Naive thymus-derived CD4-positive, alpha-beta T cell (primary cell): ENCODE measurements at regions of chr12 and their contacts with region 1.

Region 1: DNA sequence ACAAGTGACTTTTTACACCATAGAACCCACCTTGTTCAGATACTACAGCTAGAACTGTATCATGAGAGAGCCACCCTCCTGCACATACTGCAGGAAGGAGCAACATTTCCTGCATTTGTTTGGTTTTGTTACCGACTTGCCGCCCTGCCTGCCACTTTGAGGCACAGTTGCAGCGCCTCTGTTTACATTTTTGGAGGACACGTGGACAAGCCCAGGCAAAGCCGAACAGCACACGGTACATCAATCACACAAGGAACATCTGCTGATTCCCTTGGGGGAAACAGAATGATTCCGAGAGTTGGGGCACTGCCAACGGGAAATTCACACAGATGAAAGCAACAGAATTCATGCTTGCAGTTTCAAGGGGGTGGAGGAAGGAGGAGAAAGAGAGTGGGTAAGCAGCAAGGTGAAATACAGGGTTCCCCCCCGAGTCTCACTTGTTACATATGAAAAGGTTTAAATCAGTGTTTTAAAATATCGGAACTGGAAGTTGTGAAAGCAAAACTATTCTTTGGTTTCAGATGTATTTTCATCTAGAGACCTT is 110.7 kb downstream of the BTG1 start:
- DNase-seq: peak; percentile 26 to 79 (median 71)
- ATAC-seq: peak; percentile 54
- H3K4me3 ChIP-seq: peak overlapping the region; percentile 52
- H3K4me3 Mint-ChIP-seq: peak overlapping the region; percentile 84 to 99 (median 91)
- H3K27ac ChIP-seq: peak overlapping the region; percentile 76
- H3K27ac Mint-ChIP-seq: peak overlapping the region; percentile 95 to 100 (median 99)
- H3K4me1 ChIP-seq: peaks cover 71 to 81% of the 10 kb centered on the region in 2 donors
- H3K4me1 Mint-ChIP-seq: peaks cover 49 to 100% (median 94%) of the 10 kb centered on the region in 7 donors
- H3K27me3 ChIP-seq: no peaks in the 10 kb centered on the region
- H3K27me3 Mint-ChIP-seq: no peaks in the 10 kb centered on the region

Region 2: DNA sequence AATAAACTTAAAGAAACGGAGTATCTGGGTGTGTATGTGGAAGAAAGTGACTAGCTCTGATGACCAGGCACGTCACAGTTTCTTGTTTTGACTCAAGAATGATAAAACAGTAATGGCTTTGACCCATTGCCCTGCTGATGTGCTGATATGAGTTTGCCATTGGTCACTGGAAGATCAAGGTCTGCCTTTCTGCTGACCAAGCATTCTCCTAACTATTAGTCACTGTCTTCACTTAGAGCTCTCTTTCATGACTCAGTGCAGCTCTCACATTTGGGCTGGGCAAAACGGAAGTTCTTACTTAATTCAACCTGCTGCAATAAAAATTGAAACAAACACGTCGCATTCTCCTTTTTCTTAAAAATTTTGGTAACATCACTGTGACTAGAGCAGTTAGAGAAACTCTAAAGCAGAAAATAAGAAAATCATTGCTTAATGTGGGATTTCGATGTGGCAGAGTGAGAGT is 256.0 kb before region 1 on chr12:
- CTCF ChIA-PET with region 1: interaction called, 4 read pairs
- POLR2A ChIA-PET with region 1: no interaction called
- intact Hi-C with region 1: loop called in 1 of 2 experiments (anchors 1 kb)
- DNase-seq: peak in 8 of 9 donors; percentile 14 to 47 (median 27)
- ATAC-seq: peak; percentile 75
- H3K4me3 ChIP-seq: peak overlapping the region; percentile 29
- H3K4me3 Mint-ChIP-seq: peak overlapping the region; percentile 72 to 92 (median 83)
- H3K27ac ChIP-seq: peak overlapping the region; percentile 67
- H3K27ac Mint-ChIP-seq: peak overlapping the region; percentile 91 to 97 (median 93)
- H3K4me1 ChIP-seq: peaks cover 10 to 35% of the 10 kb centered on the region in 2 donors
- H3K4me1 Mint-ChIP-seq: peaks cover 19 to 70% (median 50%) of the 10 kb centered on the region in 7 donors
- H3K27me3 ChIP-seq: no peaks in the 10 kb centered on the region
- H3K27me3 Mint-ChIP-seq: peaks cover 0 to 4% (median 3%) of the 10 kb centered on the region in 5 donors

Region 3: GRCh38 chr12:91991399-91992187 is 43.3 kb before region 1 on chr12:
- CTCF ChIA-PET with region 1: interaction called, 12 read pairs
- POLR2A ChIA-PET with region 1: interaction called, 11 read pairs
- intact Hi-C with region 1: loop called in 1 of 2 experiments (anchors 1 kb)
- DNase-seq: peak in 5 of 9 donors; percentile 22 to 64 (median 48)
- ATAC-seq: peak; percentile 83
- H3K4me3 ChIP-seq: no peak overlapping the region
- H3K4me3 Mint-ChIP-seq: peak overlapping the region in 5 of 10 donors; percentile 18 to 50 (median 32)
- H3K27ac ChIP-seq: peak overlapping the region; percentile 26
- H3K27ac Mint-ChIP-seq: peak overlapping the region in 7 of 9 donors; percentile 8 to 92 (median 70)
- H3K4me1 ChIP-seq: peaks cover 9 to 27% of the 10 kb centered on the region in 2 donors
- H3K4me1 Mint-ChIP-seq: peaks cover 9 to 92% (median 79%) of the 10 kb centered on the region in 7 donors
- H3K27me3 ChIP-seq: no peaks in the 10 kb centered on the region
- H3K27me3 Mint-ChIP-seq: no peaks in the 10 kb centered on the region

Region 4: GRCh38 chr12:92021665-92022033 is 13.3 kb before region 1 on chr12:
- CTCF ChIA-PET with region 1: no interaction called
- POLR2A ChIA-PET with region 1: interaction called, 15 read pairs
- intact Hi-C with region 1: no loop called
- DNase-seq: no peak
- ATAC-seq: no peak
- H3K4me3 ChIP-seq: no peak overlapping the region
- H3K4me3 Mint-ChIP-seq: peak overlapping the region in 7 of 10 donors; percentile 30 to 70 (median 41)
- H3K27ac ChIP-seq: no peak overlapping the region
- H3K27ac Mint-ChIP-seq: peak overlapping the region in 6 of 9 donors; percentile 53 to 86 (median 80)
- H3K4me1 ChIP-seq: peaks cover 0 to 20% of the 10 kb centered on the region in 2 donors
- H3K4me1 Mint-ChIP-seq: peaks cover 20 to 76% (median 62%) of the 10 kb centered on the region in 7 donors
- H3K27me3 ChIP-seq: no peaks in the 10 kb centered on the region
- H3K27me3 Mint-ChIP-seq: no peaks in the 10 kb centered on the region

Region 5: DNA sequence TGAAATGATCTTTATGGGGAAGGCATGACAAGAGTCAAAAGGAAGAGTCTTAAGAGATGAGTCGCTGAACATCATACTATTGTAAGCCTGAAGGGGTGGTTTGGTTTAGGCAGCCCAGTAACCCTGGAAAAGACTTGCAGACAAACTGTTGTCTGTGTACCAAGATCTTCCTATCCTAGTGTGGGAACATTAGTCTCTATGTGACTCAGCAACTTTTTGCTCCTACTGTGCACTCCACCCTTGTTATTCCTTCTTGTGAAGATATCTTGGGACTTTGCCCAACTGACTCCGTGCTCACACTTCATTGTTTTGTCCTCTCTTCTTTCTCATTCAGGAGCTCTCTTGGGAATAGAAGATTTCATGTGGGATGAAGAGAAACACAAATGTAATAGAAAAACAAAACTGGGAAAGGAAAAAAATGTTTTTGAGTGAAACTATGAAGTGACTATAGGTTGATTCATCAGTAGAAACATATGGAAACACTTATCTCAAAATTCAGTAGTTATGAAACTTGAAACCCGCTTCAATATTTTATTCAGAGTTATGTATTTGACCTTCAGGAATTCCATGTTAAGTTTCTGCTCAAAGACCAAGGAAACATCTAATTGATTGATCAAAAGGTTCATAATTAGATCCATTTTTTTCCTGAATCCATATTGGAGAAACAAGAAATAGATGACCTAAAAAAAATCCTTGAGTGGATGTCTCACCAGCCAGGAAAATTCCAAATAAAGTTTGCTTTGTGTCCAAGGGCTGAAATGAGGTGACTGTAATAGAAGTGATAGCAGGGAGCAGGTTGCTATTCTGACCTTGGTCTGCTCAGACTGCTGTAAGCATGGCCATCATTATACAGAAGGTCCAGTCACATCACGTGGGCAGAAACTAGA is 43.5 kb after region 1 on chr12:
- CTCF ChIA-PET with region 1: no interaction called
- POLR2A ChIA-PET with region 1: interaction called, 4 read pairs
- intact Hi-C with region 1: loop called in 1 of 2 experiments (anchors 2 kb)
- DNase-seq: no peak
- ATAC-seq: peak; percentile 31
- H3K4me3 ChIP-seq: no peak overlapping the region
- H3K4me3 Mint-ChIP-seq: peak overlapping the region in 7 of 10 donors; percentile 12 to 88 (median 51)
- H3K27ac ChIP-seq: peak overlapping the region; percentile 5
- H3K27ac Mint-ChIP-seq: peak overlapping the region in 8 of 9 donors; percentile 83 to 96 (median 90)
- H3K4me1 ChIP-seq: peaks cover 10 to 45% of the 10 kb centered on the region in 2 donors
- H3K4me1 Mint-ChIP-seq: peaks cover 37 to 87% (median 79%) of the 10 kb centered on the region in 7 donors
- H3K27me3 ChIP-seq: no peaks in the 10 kb centered on the region
- H3K27me3 Mint-ChIP-seq: no peaks in the 10 kb centered on the region

Region 6: GRCh38 chr12:92208613-92209121 is 173.7 kb after region 1 on chr12:
- CTCF ChIA-PET with region 1: interaction called, 4 read pairs
- POLR2A ChIA-PET with region 1: interaction called, 3 read pairs
- intact Hi-C with region 1: loop called in 1 of 2 experiments (anchors 1 kb)
- DNase-seq: peak in 7 of 9 donors; percentile 55 to 76 (median 63)
- ATAC-seq: peak; percentile 92
- H3K4me3 ChIP-seq: peak overlapping the region; percentile 29
- H3K4me3 Mint-ChIP-seq: peak overlapping the region; percentile 58 to 90 (median 76)
- H3K27ac ChIP-seq: peak overlapping the region; percentile 48
- H3K27ac Mint-ChIP-seq: peak overlapping the region; percentile 72 to 97 (median 95)
- H3K4me1 ChIP-seq: peaks cover 18 to 25% of the 10 kb centered on the region in 2 donors
- H3K4me1 Mint-ChIP-seq: peaks cover 19 to 55% (median 41%) of the 10 kb centered on the region in 7 donors
- H3K27me3 ChIP-seq: no peaks in the 10 kb centered on the region
- H3K27me3 Mint-ChIP-seq: no peaks in the 10 kb centered on the region

Region 7: DNA sequence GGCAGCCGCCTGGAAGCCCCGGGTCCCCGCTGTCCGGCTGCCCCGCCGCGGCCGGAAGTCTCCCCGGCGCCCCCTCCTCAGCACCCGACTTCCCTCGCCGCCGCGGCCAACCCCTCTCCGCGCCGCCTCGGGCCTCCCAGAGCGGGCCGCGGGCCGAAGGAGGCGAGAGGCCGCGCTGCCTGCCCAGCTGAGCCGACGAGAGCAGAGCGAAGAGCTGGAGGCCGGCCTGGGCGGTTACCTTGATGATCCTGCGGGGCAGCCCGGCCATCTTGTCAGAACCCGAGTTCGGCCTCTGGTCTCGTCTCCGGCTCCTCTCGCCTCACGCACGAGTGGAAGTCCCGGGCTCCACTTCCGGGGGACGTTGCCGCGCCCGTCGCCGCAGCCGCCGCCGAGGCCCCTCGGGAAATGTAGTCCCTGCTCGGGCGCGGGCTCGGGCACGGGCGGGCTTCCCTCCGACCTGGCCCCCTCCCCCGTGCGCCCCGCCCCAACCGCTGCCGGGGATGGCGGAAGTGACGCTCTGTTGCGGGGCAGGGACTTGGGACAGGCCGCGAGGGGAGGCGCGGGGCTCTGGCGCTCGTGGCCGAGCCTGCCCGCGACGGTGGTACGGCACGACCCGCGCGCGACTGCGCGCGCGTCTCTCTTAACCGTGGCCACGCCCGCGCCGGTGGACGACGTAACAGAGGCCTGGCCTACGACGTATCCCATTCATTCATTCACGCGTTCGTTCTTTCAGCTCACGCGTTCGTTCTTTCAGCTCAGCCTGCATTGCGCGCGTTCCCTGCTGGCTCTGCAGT is 1406.9 kb after region 1 on chr12 and contains the start of gene UBE2N:
- CTCF ChIA-PET with region 1: no interaction called
- POLR2A ChIA-PET with region 1: no interaction called
- intact Hi-C with region 1: loop called in 1 of 2 experiments (anchors 10 kb)
- DNase-seq: peak; percentile 96 to 98 (median 97)
- ATAC-seq: peak; percentile 95
- H3K4me3 ChIP-seq: peak within 1 kb of the TSS; percentile 66
- H3K4me3 Mint-ChIP-seq: peak within 1 kb of the TSS; percentile 89 to 100 (median 97)
- H3K27ac ChIP-seq: peak within 1 kb of the TSS; percentile 98
- H3K27ac Mint-ChIP-seq: peak within 1 kb of the TSS; percentile 96 to 100 (median 98)
- H3K4me1 ChIP-seq: peaks cover 35 to 48% of the 10 kb centered on the region in 2 donors
- H3K4me1 Mint-ChIP-seq: peaks cover 44 to 54% (median 49%) of the 10 kb centered on the region in 7 donors
- H3K27me3 ChIP-seq: no peaks in the 10 kb centered on the region
- H3K27me3 Mint-ChIP-seq: no peaks in the 10 kb centered on the region
- total RNA-seq, gene UBE2N: 76.6 to 180 (median 77.5) TPM